ENCODE measurements at regions of chr20 and their contacts with region 1.

Region 1: GRCh38 chr20:62182613-62183425 is at the start of gene MTG2:
- DNase-seq: peak; percentile 61 to 96
- H3K4me3 ChIP-seq: peak within 1 kb of the TSS; percentile 84 to 88
- H3K27ac ChIP-seq: peak within 1 kb of the TSS; percentile 87 to 97
- H3K4me1 ChIP-seq: peaks cover 3 to 19% of the 10 kb centered on the region in 2 donors
- H3K27me3 ChIP-seq: no peaks in the 10 kb centered on the region
- CTCF ChIP-seq: no peak
- total RNA-seq, gene MTG2: 14.5 TPM

Region 2: GRCh38 chr20:62121776-62122631 is 60.8 kb before region 1 on chr20 and contains the start of gene LSM14B:
- intact Hi-C with region 1: loop called (anchors 2 kb)
- DNase-seq: peak; percentile 84 to 98
- H3K4me3 ChIP-seq: peak within 1 kb of the TSS; percentile 70 to 84
- H3K27ac ChIP-seq: peak within 1 kb of the TSS; percentile 97 to 98
- H3K4me1 ChIP-seq: peaks cover 0 to 26% of the 10 kb centered on the region in 2 donors
- H3K27me3 ChIP-seq: no peaks in the 10 kb centered on the region
- CTCF ChIP-seq: no peak
- total RNA-seq, gene LSM14B: 27.6 TPM

Region 3: DNA sequence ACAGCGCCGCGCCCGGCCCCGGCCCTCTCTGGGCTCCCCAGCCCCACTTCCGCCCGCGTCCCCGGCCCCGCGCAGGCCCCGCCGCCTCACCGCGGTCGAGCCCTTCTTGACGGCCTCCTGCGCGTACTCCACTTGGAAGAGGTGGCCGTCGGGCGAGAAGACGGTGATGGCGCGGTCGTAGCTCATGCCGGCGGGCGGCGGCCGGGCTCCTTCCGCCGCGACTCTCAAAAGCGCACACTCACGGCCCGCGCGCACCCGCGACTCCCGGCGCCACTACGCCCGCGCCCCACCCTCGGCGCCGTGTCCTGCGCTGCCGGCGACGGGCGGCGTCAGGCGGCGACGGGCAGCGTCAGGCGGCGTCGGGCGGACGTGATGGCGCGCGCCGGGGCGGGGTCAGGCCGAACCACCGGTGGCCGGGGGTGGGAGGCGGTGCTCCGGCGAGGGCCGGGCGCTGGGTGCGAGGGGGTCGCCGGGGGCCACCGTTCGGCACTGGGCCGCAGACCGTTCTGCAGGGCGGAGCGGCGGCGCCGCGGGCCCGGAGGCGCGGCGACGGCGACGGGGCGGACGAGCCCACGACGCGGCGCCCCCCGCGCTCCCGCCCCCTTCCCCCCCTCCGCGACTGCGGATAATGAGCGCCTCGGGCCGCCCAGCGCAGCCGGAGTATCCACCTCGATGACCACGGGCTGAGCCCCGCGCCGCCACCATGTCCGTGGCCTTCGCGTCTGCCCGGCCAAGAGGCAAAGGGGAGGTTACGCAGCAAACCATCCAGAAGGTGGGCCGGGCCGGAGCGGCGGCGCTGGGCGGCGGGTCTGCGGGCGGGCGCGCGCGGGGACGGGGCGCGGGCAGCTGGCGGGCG is 39.5 kb before region 1 on chr20 and contains the starts of genes PSMA7 and SS18L1:
- intact Hi-C with region 1: loop called (anchors 1 kb)
- DNase-seq: peak in 1 of 2 donors; percentile 91
- H3K4me3 ChIP-seq: peak within 1 kb of the TSS; percentile 91 to 99
- H3K27ac ChIP-seq: peak within 1 kb of the TSS; percentile 92 to 97
- H3K4me1 ChIP-seq: peaks cover 9 to 31% of the 10 kb centered on the region in 2 donors
- H3K27me3 ChIP-seq: no peaks in the 10 kb centered on the region
- CTCF ChIP-seq: peak in 1 of 3 experiments; percentile 6
- total RNA-seq, gene PSMA7: 301 TPM
- total RNA-seq, gene SS18L1: 39.8 TPM

Region 4: DNA sequence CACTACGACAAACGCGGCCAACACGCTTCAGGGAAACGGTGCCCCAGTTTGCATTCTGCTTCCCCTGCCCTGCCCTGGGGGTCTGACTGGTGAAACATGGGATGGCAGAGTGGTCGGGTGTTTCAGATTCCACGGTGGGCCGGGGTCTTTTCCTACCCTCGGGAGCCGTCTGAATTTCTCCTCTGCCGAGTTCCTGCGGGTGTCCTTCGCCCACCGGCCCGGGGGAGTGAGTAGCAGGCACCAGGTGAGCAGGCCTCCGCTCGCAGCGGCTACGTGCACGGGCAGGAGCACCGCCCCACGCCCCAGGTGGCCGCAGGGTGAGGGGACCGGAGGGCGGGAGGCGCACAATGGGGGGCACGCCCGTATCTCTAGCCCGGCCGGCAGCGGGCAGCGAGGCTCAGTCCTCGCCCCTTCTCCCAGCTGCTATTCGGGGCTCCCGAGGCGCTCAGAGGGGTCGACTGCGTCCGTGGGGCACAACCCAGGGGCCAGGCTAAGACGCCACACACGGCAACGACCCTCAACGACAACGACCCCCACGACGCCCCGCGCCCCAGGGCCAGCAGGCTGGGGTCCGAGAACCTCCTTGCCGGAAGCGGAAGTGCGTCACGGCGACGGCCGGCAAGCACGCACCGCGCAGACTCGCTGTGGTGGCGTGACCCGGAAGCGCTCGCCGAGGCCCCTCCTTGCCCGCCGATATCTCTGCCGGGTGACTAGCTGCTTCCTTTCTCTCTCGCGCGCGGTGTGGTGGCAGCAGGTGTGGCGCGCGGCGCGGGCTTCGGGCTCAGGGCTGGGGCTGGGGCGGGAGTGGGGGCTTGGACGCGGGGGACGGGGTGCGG is 203.8 kb after region 1 on chr20 and contains the start of gene RPS21:
- intact Hi-C with region 1: loop called (anchors 10 kb)
- DNase-seq: peak; percentile 57 to 96
- H3K4me3 ChIP-seq: peak within 1 kb of the TSS; percentile 81 to 93
- H3K27ac ChIP-seq: peak within 1 kb of the TSS; percentile 93 to 94
- H3K4me1 ChIP-seq: peaks cover 15% of the 10 kb centered on the region in 2 donors
- H3K27me3 ChIP-seq: no peaks in the 10 kb centered on the region
- CTCF ChIP-seq: no peak
- total RNA-seq, gene RPS21: 1,828 TPM

Region 5: DNA sequence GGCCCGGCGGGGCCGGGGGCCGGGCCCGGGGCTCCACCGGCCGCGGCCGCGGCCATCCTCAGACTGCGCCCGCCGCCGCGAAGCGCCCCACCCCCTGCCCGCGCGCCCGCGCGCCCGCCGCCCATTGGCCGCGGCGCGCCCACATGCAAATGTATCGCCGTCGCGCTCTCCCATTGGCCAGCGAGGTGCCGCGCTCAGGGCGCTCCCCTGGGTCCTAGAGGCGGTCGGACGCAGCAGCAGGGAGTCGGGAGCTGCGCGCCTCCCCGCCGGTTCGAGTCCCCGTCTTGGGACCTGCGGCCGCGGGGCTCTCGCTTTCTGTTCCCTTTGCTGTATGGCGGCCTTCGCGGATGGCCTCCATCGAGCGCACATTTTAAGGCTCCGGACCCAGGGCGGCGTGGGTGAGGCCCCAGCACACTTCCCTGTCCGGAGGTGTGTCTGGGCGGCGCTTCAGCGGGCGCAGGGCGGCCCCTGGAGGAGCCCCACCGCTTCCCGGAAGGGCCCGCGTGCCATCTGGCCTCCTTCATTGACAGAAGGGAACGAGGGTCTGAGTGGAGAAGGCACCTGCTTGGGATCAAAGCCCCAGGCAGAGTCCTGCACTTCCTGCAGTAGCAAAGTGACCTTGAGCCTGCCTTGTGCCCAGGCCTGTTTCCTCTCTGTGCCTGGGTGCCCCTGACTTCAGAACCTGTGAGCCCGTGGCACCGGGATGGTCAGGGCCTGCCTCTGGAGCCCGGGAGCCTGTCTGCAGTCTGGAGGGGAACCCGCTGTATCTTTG is 224.6 kb after region 1 on chr20 and contains the start of gene CABLES2:
- intact Hi-C with region 1: loop called (anchors 5 kb)
- DNase-seq: peak; percentile 87 to 96
- H3K4me3 ChIP-seq: peak within 1 kb of the TSS; percentile 69 to 81
- H3K27ac ChIP-seq: peak within 1 kb of the TSS; percentile 48 to 72
- H3K4me1 ChIP-seq: peaks cover 10 to 24% of the 10 kb centered on the region in 2 donors
- H3K27me3 ChIP-seq: no peaks in the 10 kb centered on the region
- CTCF ChIP-seq: peak in 1 of 3 experiments; percentile 25
- total RNA-seq, gene CABLES2: 0.43 TPM

Measured in ascending aorta (tissue), 2 donors.